RWPE1 (cell line): ENCODE measurements at regions of chr12 and their contacts with region 1.

Region 1: DNA sequence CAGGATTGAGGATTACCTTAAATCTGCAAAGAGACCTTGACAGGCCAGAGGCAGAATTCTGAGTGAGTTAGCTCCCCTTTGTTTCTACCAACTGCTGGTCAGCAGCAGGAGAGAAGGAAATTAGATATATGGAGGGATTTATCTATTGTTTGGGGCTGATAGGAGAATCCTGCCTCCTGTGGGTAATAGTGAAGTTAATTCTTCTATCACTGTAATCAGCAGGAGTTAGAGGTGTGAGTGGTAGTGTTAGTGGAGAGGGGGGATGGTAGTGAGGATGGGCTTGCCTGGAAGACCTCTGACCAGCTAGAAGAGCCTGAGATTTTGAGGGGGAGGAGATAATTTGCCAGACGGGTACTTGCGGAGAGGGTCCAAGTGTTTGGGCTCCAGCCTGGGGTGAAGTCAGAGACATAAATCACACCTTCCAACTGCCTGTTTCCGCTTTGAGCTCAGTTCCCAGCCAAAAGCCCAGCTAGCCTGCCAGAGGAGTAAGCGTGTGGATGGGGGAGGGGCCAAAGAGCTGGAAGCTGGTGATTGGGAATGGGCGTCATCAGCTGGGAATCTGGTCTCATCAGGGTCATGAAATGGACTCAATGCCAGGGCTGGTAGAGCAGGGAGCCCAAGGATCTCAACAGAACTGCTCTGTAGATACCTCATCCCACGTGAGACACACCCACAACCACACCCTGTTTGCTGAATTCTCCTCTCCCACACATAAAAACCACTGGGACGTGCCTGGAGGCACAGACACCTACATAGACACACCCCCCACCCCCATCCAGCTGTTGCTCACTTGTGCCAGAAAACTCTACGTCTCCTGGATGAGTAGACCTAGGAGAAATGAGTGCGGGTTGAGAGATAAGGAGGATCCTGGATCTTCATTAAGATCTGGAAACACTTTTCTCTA is 13.1 kb upstream of the ITGA5 start:
- DNase-seq: peak; percentile 93
- H3K27ac ChIP-seq: peak overlapping the region; percentile 86
- CTCF ChIP-seq: no peak

Region 2: GRCh38 chr12:54189198-54189539 is 243.0 kb before region 1 on chr12:
- CTCF ChIA-PET with region 1: no interaction called
- POLR2A ChIA-PET with region 1: no interaction called
- DNase-seq: no peak
- H3K27ac ChIP-seq: no peak overlapping the region
- CTCF ChIP-seq: no peak

Region 3: DNA sequence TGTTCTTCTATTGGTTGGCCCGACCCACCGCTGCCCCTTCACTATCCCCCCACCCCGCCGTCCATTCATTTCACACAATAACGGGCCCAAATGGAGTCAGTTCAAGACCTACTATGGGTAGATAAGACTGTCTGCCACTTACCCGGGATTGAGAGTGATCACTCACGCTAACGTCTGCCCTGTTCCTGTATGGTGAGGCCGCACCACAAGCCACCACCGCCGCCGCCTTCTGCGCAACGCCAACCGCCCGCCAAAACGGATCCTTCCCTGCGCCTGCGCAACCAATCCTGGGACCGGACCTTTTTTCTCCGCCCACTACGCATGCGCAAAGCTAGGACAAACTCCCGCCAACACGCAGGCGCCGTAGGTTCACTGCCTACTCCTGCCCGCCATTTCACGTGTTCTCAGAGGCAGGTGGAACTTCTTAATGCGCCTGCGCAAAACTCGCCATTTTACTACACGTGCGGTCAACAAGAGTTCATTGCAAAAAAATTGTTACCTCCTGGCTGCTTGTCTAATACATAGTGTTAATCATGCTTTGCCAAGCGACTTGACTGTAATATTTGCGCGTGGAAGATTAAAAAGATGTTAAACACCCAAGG is 152.2 kb before region 1 on chr12 and contains the start of gene CBX5:
- CTCF ChIA-PET with region 1: no interaction called
- POLR2A ChIA-PET with region 1: no interaction called
- DNase-seq: peak; percentile 100
- H3K27ac ChIP-seq: peak within 1 kb of the TSS; percentile 97
- CTCF ChIP-seq: no peak

Region 4: GRCh38 chr12:54404061-54405004 is 27.8 kb before region 1 on chr12:
- CTCF ChIA-PET with region 1: interaction called, 170 read pairs
- POLR2A ChIA-PET with region 1: no interaction called
- DNase-seq: no peak
- H3K27ac ChIP-seq: peak overlapping the region; percentile 53
- CTCF ChIP-seq: peak; percentile 92